PC-9 (cell line): ENCODE measurements at regions of chr7 and their contacts with region 1.

Region 1: GRCh38 chr7:124429923-124430322 is 335.7 kb downstream of the GPR37 start:
- DNase-seq: no peak
- H3K4me3 ChIP-seq: no peak overlapping the region
- H3K27ac ChIP-seq: no peak overlapping the region
- H3K4me1 ChIP-seq: no peaks in the 10 kb centered on the region
- H3K27me3 ChIP-seq: no peaks in the 10 kb centered on the region
- CTCF ChIP-seq: no peak

Region 2: DNA sequence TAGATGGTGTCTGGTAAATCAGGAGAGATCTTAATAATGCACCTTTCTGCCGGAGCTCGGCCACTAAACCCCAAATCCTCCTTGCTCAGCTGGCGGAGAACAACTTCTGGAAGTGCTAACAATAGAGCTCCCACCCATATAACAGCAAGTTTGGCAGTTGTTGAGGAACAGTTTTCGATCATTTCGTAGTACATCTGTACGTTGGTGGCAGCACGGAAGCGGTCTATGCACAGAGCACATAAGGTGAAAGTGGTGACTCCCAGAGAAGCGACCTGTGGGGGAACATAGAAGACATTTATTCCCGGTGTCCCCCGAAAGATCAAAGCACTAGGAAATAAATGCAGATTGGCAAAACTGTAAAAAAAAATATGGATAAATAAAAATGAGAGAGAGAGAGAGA is 317.1 kb after region 1 on chr7:
- CTCF ChIA-PET with region 1: no interaction called
- POLR2A ChIA-PET with region 1: no interaction called
- intact Hi-C with region 1: loop called (anchors 5 kb)
- DNase-seq: no peak
- H3K4me3 ChIP-seq: no peak overlapping the region
- H3K27ac ChIP-seq: no peak overlapping the region
- H3K4me1 ChIP-seq: no peaks in the 10 kb centered on the region
- H3K27me3 ChIP-seq: no peaks in the 10 kb centered on the region
- CTCF ChIP-seq: no peak